Right ventricle myocardium superior (tissue), 1 donor: ENCODE measurements at regions of chr7 and their contacts with region 1.

Region 1: GRCh38 chr7:99340659-99341058 is 15.0 kb downstream of the ARPC1A start:
- DNase-seq: no peak
- ATAC-seq: no peak

Region 2: GRCh38 chr7:98907570-98907969 is 433.1 kb before region 1 on chr7:
- intact Hi-C with region 1: loop called (anchors 10 kb)
- DNase-seq: no peak
- ATAC-seq: no peak